Caco-2 (cell line): ENCODE measurements at regions of chr16 and their contacts with region 1.

Region 1: DNA sequence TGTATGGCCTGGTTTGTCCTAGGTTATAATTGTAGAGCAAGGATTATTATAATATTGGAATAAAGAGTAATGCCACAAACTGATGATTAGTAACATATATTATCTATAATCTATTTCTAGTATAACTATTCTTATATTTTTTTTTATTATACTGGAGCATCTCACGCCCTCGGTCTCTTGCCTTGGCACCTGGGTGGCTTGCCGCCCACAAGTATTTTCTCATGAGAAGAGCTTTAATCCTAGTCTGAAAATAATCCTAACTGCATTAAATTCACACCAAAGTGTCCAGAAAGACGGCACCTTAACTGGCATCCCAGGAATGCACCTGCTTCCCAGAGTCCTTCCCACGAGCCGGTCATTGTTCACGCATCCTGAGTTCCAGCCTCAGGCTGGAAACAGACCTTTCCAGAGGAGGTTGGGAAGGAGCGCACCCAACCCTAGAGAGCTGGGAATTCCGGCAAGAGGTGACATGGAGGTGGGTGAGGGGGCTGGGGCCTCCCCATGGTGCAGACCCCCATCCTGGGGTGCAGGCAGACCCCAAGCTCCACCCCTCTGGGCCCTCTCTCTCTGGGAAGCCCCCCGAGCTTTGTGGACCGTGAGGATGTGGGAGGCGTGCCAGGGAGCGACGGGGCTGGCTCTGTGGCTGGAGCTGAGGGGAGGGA is 15.9 kb downstream of the CHMP1A start:
- DNase-seq: no peak
- H3K4me3 ChIP-seq: no peak overlapping the region
- H3K4me3 Mint-ChIP-seq: no peak overlapping the region
- H3K27ac Mint-ChIP-seq: no peak overlapping the region
- H3K4me1 ChIP-seq: no peaks in the 10 kb centered on the region
- H3K4me1 Mint-ChIP-seq: peaks cover 8% of the 10 kb centered on the region
- H3K27me3 ChIP-seq: no peaks in the 10 kb centered on the region
- H3K27me3 Mint-ChIP-seq: no peaks in the 10 kb centered on the region
- CTCF ChIP-seq: no peak

Region 2: GRCh38 chr16:89572073-89572475 is 69.5 kb before region 1 on chr16:
- CTCF ChIA-PET with region 1: no interaction called
- POLR2A ChIA-PET with region 1: no interaction called
- intact Hi-C with region 1: loop called (anchors 1 kb)
- DNase-seq: no peak
- H3K4me3 ChIP-seq: no peak overlapping the region
- H3K4me3 Mint-ChIP-seq: no peak overlapping the region
- H3K27ac Mint-ChIP-seq: no peak overlapping the region
- H3K4me1 ChIP-seq: peaks cover 27% of the 10 kb centered on the region
- H3K4me1 Mint-ChIP-seq: peaks cover 14% of the 10 kb centered on the region
- H3K27me3 ChIP-seq: no peaks in the 10 kb centered on the region
- H3K27me3 Mint-ChIP-seq: no peaks in the 10 kb centered on the region
- CTCF ChIP-seq: no peak

Region 3: GRCh38 chr16:89599451-89599858 is 42.1 kb before region 1 on chr16:
- CTCF ChIA-PET with region 1: interaction called, 7 read pairs
- POLR2A ChIA-PET with region 1: no interaction called
- intact Hi-C with region 1: loop called (anchors 1 kb)
- DNase-seq: peak; percentile 85
- H3K4me3 ChIP-seq: no peak overlapping the region
- H3K4me3 Mint-ChIP-seq: no peak overlapping the region
- H3K27ac Mint-ChIP-seq: no peak overlapping the region
- H3K4me1 ChIP-seq: no peaks in the 10 kb centered on the region
- H3K4me1 Mint-ChIP-seq: no peaks in the 10 kb centered on the region
- H3K27me3 ChIP-seq: no peaks in the 10 kb centered on the region
- H3K27me3 Mint-ChIP-seq: no peaks in the 10 kb centered on the region
- CTCF ChIP-seq: peak; percentile 71 to 83

Region 4: GRCh38 chr16:89618114-89618999 is 23.2 kb before region 1 on chr16:
- CTCF ChIA-PET with region 1: interaction called, 9 read pairs
- POLR2A ChIA-PET with region 1: no interaction called
- intact Hi-C with region 1: loop called (anchors 2 kb)
- DNase-seq: no peak
- H3K4me3 ChIP-seq: no peak overlapping the region
- H3K4me3 Mint-ChIP-seq: no peak overlapping the region
- H3K27ac Mint-ChIP-seq: no peak overlapping the region
- H3K4me1 ChIP-seq: peaks cover 17% of the 10 kb centered on the region
- H3K4me1 Mint-ChIP-seq: peaks cover 9% of the 10 kb centered on the region
- H3K27me3 ChIP-seq: no peaks in the 10 kb centered on the region
- H3K27me3 Mint-ChIP-seq: no peaks in the 10 kb centered on the region
- CTCF ChIP-seq: no peak

Region 5: DNA sequence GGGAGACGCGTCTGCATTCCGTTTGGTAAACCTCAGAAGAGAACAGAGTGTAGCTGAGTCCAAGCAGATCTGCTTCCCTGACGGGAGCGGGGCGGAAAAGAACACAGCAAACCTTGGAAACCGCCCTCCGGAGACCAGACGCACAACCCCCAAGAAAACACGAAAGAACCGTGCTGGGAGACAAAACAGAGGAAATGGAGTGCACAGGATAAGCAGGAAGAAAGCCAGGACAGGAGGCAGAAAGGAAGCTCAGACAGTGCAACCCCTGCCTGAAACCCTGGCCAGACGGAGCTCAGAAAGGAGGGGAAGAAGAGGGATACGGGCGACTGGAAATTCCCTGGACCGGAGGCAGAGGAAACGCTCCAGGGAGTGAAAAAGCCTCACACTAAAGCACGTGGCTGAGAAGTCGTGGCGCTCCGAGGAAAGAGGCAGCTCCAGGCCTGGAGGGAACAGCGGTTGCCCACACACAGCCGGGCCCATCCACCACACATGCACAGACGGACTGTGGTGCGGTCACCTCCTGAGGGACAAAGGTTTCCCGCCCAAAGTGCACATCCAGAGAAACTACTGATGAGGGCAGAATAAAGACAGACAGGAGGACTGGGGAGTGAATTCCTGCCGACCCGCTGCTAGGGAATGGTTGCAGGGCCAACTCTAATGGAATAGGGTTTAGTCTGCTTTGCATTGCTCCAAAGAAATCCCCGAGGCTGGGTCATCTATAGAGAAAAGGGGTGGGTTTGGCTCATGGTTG is 17.9 kb before region 1 on chr16:
- CTCF ChIA-PET with region 1: interaction called, 9 read pairs
- POLR2A ChIA-PET with region 1: no interaction called
- intact Hi-C with region 1: loop called (anchors 2 kb)
- DNase-seq: no peak
- H3K4me3 ChIP-seq: no peak overlapping the region
- H3K4me3 Mint-ChIP-seq: no peak overlapping the region
- H3K27ac Mint-ChIP-seq: peak overlapping the region; percentile 64
- H3K4me1 ChIP-seq: peaks cover 40% of the 10 kb centered on the region
- H3K4me1 Mint-ChIP-seq: peaks cover 25% of the 10 kb centered on the region
- H3K27me3 ChIP-seq: no peaks in the 10 kb centered on the region
- H3K27me3 Mint-ChIP-seq: no peaks in the 10 kb centered on the region
- CTCF ChIP-seq: no peak

Region 6: DNA sequence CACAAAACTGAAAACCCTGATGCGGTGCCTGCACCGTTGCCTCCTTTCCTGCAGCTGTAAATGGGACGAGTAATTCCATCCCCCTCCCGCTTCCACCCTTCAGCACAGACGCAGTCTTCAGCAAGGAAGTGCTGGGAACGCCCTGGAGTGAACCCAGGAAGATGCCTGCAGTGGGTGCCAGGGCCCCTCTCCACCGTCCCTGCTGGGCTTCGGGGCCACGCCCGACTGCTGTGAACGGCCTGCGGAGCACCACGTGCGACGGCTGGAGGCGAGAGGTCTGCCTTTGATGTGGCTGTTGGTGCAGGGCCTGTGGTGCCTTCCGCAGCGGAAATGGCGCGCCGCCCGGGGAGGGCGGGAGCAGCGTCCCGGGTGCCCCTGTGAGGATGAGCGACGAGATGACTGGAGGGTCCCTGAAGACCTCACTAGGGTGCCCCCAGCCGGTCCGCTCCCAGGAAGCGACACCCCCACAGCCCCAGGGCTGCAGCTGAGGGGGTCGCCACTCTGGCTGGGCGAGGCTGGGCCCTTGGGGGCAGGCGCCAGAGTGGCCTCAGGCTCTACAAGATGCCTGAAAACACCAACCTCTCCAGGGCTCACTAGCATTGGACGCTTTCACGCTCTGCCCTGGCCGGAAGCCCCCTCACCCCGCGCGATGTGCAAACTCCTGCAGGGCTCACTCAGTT is 276.3 kb after region 1 on chr16:
- CTCF ChIA-PET with region 1: no interaction called
- POLR2A ChIA-PET with region 1: no interaction called
- intact Hi-C with region 1: no loop called
- DNase-seq: peak; percentile 83 to 87
- H3K4me3 ChIP-seq: peak overlapping the region; percentile 66
- H3K4me3 Mint-ChIP-seq: peak overlapping the region; percentile 92
- H3K27ac Mint-ChIP-seq: peak overlapping the region; percentile 67
- H3K4me1 ChIP-seq: peaks cover 24% of the 10 kb centered on the region
- H3K4me1 Mint-ChIP-seq: peaks cover 6% of the 10 kb centered on the region
- H3K27me3 ChIP-seq: no peaks in the 10 kb centered on the region
- H3K27me3 Mint-ChIP-seq: no peaks in the 10 kb centered on the region
- CTCF ChIP-seq: no peak